BJ (cell line): ENCODE measurements at regions of chr11 and their contacts with region 1.

Region 1: GRCh38 chr11:75248690-75249268 is 8.2 kb downstream of the TPBGL start:
- DNase-seq: peak; percentile 37
- H3K4me3 ChIP-seq: no peak overlapping the region
- H3K27me3 ChIP-seq: peaks cover 17% of the 10 kb centered on the region
- CTCF ChIP-seq: peak; percentile 100

Region 2: GRCh38 chr11:75022759-75023396 is 225.9 kb before region 1 on chr11:
- CTCF ChIA-PET with region 1: interaction called, 95 read pairs
- POLR2A ChIA-PET with region 1: no interaction called
- DNase-seq: peak; percentile 16
- H3K4me3 ChIP-seq: no peak overlapping the region
- H3K27me3 ChIP-seq: no peaks in the 10 kb centered on the region
- CTCF ChIP-seq: peak; percentile 97

Region 3: GRCh38 chr11:75031771-75032549 is 216.8 kb before region 1 on chr11:
- CTCF ChIA-PET with region 1: interaction called, 95 read pairs
- POLR2A ChIA-PET with region 1: no interaction called
- DNase-seq: no peak
- H3K4me3 ChIP-seq: no peak overlapping the region
- H3K27me3 ChIP-seq: no peaks in the 10 kb centered on the region; the same call in 1 of the 2 replicates
- CTCF ChIP-seq: peak; percentile 86

Region 4: GRCh38 chr11:75204685-75205563 is 43.9 kb before region 1 on chr11:
- CTCF ChIA-PET with region 1: interaction called, 28 read pairs
- POLR2A ChIA-PET with region 1: no interaction called
- DNase-seq: peak; percentile 4
- H3K4me3 ChIP-seq: no peak overlapping the region
- H3K27me3 ChIP-seq: peaks cover 10% of the 10 kb centered on the region
- CTCF ChIP-seq: peak; percentile 95

Region 5: DNA sequence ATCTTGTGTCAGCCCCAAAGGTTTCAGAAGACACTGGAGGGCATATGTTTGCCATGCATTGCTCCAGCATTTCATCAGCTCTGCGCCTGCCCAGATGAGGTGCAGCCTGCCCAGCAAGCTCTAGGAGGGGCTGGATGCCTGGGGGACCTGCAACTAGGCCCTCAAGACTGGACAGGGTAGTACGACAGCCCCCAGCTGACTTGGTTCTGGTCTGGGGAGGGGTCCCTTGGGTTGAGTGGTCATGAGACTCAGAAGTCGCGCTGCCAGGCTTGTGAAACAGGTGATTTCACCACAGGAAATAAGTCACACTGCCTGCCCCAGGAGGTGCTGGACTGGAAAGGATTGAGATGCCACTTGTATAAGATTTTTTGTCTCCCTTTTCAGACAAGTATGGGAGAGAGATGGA is 15.2 kb after region 1 on chr11:
- CTCF ChIA-PET with region 1: interaction called, 26 read pairs
- POLR2A ChIA-PET with region 1: no interaction called
- DNase-seq: no peak
- H3K4me3 ChIP-seq: no peak overlapping the region
- H3K27me3 ChIP-seq: peaks cover 2% of the 10 kb centered on the region; the same call in 1 of the 2 replicates
- CTCF ChIP-seq: no peak

Region 6: DNA sequence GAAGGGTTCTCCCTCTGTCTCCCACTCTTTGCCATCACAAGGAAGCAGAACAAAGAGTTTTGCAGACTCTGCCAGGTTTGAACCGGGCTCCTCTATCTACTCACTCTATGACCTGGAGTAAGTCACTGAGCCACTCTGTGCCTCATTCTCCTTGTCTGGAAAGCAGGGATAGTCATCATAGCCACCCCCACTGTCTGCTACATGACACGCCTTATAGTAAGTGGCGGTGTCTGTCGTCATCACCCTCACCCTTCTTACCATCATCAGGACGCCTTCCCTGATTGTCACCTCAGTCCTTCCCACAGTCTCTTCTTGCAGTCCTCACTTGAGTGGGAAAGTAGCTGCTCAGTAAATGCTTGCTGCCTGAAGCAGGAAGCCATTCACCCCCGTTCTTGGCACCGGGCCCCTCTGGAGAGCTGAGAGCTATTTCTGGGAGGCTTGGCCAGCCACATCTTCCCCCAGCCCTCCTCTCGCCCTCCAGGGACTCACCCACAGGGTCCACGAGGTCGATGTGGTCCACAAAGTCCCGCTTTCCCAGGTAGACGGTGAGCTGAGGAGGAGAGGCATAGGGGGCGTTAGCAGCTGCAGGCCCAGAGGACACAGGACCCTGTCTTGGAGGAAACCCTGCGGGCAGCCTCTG is 38.2 kb after region 1 on chr11:
- CTCF ChIA-PET with region 1: no interaction called
- POLR2A ChIA-PET with region 1: no interaction called
- DNase-seq: no peak
- H3K4me3 ChIP-seq: no peak overlapping the region
- H3K27me3 ChIP-seq: no peaks in the 10 kb centered on the region
- CTCF ChIP-seq: no peak

Region 7: DNA sequence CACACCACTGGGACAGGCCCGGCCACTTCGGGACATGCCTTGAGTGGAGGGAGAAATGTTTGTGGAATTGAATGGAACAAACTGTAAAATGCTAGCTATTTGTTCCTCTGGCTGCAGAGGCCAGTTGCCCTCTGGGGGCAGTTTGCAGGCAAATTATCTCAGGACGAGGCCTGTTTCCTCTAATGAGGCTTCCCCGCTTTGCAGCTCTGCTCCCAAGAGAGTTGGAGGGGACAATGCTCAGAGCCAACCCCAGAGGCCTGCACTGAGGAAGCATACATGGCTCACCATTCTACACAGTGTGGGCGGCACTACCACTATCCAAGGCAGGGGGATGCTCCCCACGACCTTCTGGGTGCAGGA is 91.3 kb after region 1 on chr11:
- CTCF ChIA-PET with region 1: no interaction called
- POLR2A ChIA-PET with region 1: no interaction called
- DNase-seq: no peak
- H3K4me3 ChIP-seq: no peak overlapping the region
- H3K27me3 ChIP-seq: no peaks in the 10 kb centered on the region
- CTCF ChIP-seq: no peak

Region 8: GRCh38 chr11:75406338-75406777 is 157.6 kb after region 1 on chr11:
- CTCF ChIA-PET with region 1: no interaction called
- POLR2A ChIA-PET with region 1: no interaction called
- DNase-seq: no peak
- H3K4me3 ChIP-seq: no peak overlapping the region
- H3K27me3 ChIP-seq: no peaks in the 10 kb centered on the region
- CTCF ChIP-seq: no peak